CD4-positive, alpha-beta T cell (primary cell): ENCODE measurements at regions of chr3 and their contacts with region 1.

Region 1: DNA sequence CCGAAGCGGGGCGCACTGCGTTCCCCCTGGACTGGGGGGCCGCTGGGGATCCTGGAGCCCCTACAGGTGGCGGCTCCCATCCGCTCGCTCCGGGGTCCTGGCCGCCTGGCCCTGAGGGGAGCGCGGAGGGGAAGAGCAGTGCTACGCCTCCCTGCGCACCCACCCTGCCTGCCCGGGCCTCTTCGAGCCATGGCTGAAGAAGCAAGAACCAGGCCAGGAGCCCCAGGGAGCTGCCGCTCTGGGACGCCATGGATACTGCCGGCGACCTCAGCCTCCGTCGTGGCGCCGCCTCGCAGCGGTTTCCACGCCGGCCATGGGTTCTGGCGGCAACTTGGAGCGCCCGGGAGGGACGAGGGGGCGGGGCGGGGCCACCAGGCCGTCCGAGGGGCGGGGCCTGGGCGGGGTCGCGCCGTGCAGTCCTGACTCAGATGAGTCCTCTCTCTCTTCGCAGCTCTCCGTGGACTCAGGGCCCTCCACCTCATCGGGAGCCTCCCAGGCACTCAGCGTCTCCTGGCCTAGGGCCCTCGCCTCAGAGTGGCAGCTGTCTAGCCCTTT is 50.9 kb downstream of the MYL3 start:
- DNase-seq: peak; percentile 46 to 88 (median 67)
- ATAC-seq: peak; percentile 93
- H3K4me3 ChIP-seq: peak overlapping the region; percentile 52
- H3K4me3 Mint-ChIP-seq: peak overlapping the region; percentile 76
- H3K27ac ChIP-seq: no peak overlapping the region
- H3K27ac Mint-ChIP-seq: no peak overlapping the region
- H3K4me1 ChIP-seq: peaks cover 11% of the 10 kb centered on the region
- H3K4me1 Mint-ChIP-seq: peaks cover 16% of the 10 kb centered on the region
- H3K27me3 ChIP-seq: peaks cover 2 to 4% of the 10 kb centered on the region in 2 experiments
- H3K27me3 Mint-ChIP-seq: no peaks in the 10 kb centered on the region
- CTCF ChIP-seq: no peak

Region 2: DNA sequence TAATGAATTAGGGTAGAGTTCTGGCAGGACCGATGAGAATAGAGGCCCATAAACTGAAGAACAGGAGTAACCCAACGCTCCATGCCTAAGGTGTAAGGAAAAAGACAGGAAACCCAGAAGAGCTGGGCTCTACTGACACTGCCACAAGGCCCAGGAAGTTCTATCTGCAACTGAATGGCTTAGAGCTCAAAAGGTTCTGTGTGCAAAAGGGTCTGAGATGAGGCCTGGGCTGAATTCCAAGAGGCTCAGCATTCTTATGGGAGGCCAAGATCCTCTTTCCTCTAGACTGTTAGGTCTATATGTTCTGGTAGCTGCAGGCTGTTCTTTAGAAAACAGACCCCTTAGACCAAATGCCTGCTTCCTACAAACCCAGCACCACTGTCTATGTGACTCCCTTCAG is 64.1 kb before region 1 on chr3:
- CTCF ChIA-PET with region 1: no interaction called
- POLR2A ChIA-PET with region 1: no interaction called
- intact Hi-C with region 1: loop called in 1 of 2 experiments (anchors 2 kb)
- DNase-seq: no peak
- ATAC-seq: no peak
- H3K4me3 ChIP-seq: no peak overlapping the region
- H3K4me3 Mint-ChIP-seq: no peak overlapping the region
- H3K27ac ChIP-seq: no peak overlapping the region
- H3K27ac Mint-ChIP-seq: no peak overlapping the region
- H3K4me1 ChIP-seq: no peaks in the 10 kb centered on the region
- H3K4me1 Mint-ChIP-seq: peaks cover 6% of the 10 kb centered on the region
- H3K27me3 ChIP-seq: no peaks in the 10 kb centered on the region
- H3K27me3 Mint-ChIP-seq: no peaks in the 10 kb centered on the region
- CTCF ChIP-seq: no peak

Region 3: GRCh38 chr3:46947981-46948791 is 135.9 kb after region 1 on chr3:
- CTCF ChIA-PET with region 1: no interaction called
- POLR2A ChIA-PET with region 1: no interaction called
- intact Hi-C with region 1: no loop called
- DNase-seq: peak; percentile 51 to 94 (median 70)
- ATAC-seq: peak; percentile 77
- H3K4me3 ChIP-seq: peak overlapping the region; percentile 1
- H3K4me3 Mint-ChIP-seq: peak overlapping the region; percentile 59
- H3K27ac ChIP-seq: peak overlapping the region; percentile 64 to 86
- H3K27ac Mint-ChIP-seq: peak overlapping the region; percentile 92
- H3K4me1 ChIP-seq: peaks cover 93% of the 10 kb centered on the region
- H3K4me1 Mint-ChIP-seq: peaks cover 84% of the 10 kb centered on the region
- H3K27me3 ChIP-seq: no peaks in the 10 kb centered on the region
- H3K27me3 Mint-ChIP-seq: no peaks in the 10 kb centered on the region
- CTCF ChIP-seq: no peak

Region 4: DNA sequence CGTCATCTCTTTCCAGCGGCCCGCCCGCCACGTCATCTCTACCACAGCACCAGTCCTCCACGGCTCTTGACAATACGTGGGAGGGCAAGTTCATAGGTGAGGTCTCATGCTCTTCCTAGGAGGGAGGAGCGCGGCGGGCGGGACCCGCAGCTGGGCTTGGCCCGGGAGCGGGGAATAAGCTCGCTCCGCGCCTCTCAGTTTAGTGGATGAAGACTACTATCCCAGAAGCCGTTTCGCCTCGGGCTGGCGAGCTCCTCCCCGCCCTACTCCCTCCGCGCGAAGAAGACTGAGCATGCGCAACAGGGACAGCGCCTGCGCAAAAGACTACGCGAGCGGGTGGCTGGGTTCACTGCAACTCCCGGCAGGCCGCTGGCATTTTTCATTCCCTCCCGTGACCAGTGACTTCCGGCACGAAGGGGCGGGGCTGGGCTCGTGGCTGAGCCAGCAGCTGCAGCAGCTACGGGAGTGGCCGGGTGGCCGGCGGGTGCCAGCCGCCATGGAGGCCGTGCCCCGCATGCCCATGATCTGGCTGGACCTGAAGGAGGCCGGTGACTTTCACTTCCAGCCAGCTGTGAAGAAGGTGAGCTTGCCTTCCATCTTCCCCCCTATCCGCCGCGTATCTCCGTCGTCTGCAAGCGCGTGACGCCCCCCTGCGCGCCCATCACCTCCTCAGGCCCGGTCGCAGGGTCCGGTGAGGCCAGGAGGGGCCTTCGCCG is 568.4 kb after region 1 on chr3 and contains the start of gene PTPN23:
- CTCF ChIA-PET with region 1: no interaction called
- POLR2A ChIA-PET with region 1: no interaction called
- intact Hi-C with region 1: no loop called
- DNase-seq: peak; percentile 97 to 99 (median 99)
- ATAC-seq: peak; percentile 84
- H3K4me3 ChIP-seq: peak within 1 kb of the TSS; percentile 97
- H3K4me3 Mint-ChIP-seq: peak within 1 kb of the TSS; percentile 95
- H3K27ac ChIP-seq: peak within 1 kb of the TSS; percentile 85 to 97
- H3K27ac Mint-ChIP-seq: peak within 1 kb of the TSS; percentile 91
- H3K4me1 ChIP-seq: peaks cover 28% of the 10 kb centered on the region
- H3K4me1 Mint-ChIP-seq: peaks cover 41% of the 10 kb centered on the region
- H3K27me3 ChIP-seq: no peaks in the 10 kb centered on the region
- H3K27me3 Mint-ChIP-seq: no peaks in the 10 kb centered on the region
- CTCF ChIP-seq: no peak
- total RNA-seq, gene PTPN23: 27.3 to 35.7 TPM

Region 5: DNA sequence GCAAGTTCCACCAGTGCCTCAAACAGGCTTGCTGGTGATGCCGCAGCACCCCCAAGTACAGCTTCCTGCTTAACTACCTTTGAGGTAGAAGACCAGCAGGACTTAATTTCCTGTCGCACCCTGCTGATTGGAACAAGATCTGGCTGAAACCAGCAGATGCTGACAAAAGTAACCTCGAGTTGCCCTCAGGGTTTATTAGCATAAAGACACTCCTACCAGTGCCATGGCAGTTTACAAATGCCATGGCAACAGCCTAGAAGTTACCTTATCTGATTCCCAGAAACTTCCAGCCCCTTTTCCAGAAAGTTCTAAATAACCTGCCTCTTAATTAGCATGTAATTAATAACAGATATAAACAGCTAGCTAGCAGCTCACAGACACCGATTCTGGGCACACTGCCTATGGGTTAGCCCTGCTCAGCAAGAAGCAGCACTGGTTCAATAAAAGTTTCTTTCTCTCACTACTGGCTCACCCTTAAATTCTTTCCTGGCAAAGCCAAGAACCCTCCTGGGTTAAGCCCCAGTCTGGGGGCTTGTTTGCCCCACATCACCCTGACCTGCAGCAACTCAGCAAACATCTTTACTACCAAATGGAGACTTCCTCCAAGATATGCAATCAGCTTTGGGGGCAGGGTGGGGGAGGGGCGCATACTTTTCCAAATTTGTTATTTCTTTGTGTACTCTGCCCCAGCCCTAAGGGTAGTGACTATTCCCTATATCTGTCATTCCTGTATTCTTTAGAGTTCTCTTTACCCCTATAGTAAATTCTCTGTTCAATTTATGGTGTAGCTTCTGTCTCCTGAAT is 1149.7 kb after region 1 on chr3:
- CTCF ChIA-PET with region 1: no interaction called
- POLR2A ChIA-PET with region 1: no interaction called
- intact Hi-C with region 1: loop called in 1 of 2 experiments (anchors 10 kb)
- DNase-seq: peak in 13 of 14 experiments; percentile 1 to 80 (median 22)
- ATAC-seq: peak; percentile 95
- H3K4me3 ChIP-seq: no peak overlapping the region
- H3K4me3 Mint-ChIP-seq: peak overlapping the region; percentile 61
- H3K27ac ChIP-seq: peak overlapping the region in 1 of 2 donors; percentile 19
- H3K27ac Mint-ChIP-seq: peak overlapping the region; percentile 77
- H3K4me1 ChIP-seq: peaks cover 15% of the 10 kb centered on the region
- H3K4me1 Mint-ChIP-seq: peaks cover 23% of the 10 kb centered on the region
- H3K27me3 ChIP-seq: no peaks in the 10 kb centered on the region
- H3K27me3 Mint-ChIP-seq: no peaks in the 10 kb centered on the region
- CTCF ChIP-seq: no peak